PC-3 (cell line): ENCODE measurements at regions of chr3 and their contacts with region 1.

Region 1: GRCh38 chr3:146148468-146148931 is 12.5 kb downstream of the PLOD2 start:
- DNase-seq: peak; percentile 34
- ATAC-seq: peak; percentile 44; the same call in 1 of the 2 replicates
- H3K4me3 ChIP-seq: no peak overlapping the region
- H3K27ac ChIP-seq: no peak overlapping the region
- H3K4me1 ChIP-seq: peaks cover 35% of the 10 kb centered on the region
- H3K27me3 ChIP-seq: no peaks in the 10 kb centered on the region
- CTCF ChIP-seq: peak; percentile 64

Region 2: GRCh38 chr3:145971186-145971585 is 177.3 kb before region 1 on chr3:
- CTCF ChIA-PET with region 1: no interaction called
- POLR2A ChIA-PET with region 1: no interaction called
- intact Hi-C with region 1: no loop called
- DNase-seq: no peak
- ATAC-seq: no peak
- H3K4me3 ChIP-seq: no peak overlapping the region
- H3K27ac ChIP-seq: no peak overlapping the region
- H3K4me1 ChIP-seq: no peaks in the 10 kb centered on the region
- H3K27me3 ChIP-seq: no peaks in the 10 kb centered on the region
- CTCF ChIP-seq: no peak

Region 3: DNA sequence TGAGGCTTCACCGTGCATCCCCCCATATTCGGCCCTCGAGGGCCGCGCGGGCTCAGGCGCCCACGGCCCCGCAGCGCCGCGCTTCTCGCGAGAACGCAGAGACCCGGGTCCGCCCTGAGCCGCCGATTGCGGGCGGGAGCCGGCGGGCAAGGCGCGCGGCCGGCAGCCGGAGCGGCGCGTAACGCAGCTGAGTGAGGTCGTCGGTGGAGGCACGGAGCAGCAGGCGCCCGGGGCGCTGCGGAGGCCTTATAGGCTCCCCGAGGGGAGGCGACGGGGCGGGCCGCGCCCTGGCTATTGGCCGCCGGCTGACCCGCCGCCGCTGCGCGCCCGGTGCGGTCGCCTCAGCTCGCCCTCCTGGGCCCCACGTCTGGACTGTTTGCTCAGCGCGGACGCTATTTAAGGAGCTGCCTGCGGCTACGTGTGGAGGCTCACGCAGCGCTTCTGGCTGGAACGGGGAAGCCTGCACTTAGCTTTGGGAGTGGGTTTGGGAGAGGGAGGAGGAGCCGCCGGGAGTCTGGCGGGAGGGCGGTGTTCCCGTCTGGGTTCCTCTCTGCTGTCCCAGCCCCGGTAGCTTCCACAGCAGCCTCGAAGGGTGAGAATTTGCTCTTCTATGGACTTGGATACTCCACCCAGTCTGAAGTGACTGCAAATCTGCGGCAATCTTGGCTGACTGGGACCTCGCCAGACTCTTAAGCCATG is 12.6 kb after region 1 on chr3 and contains the start of gene PLOD2:
- CTCF ChIA-PET with region 1: no interaction called
- POLR2A ChIA-PET with region 1: no interaction called
- intact Hi-C with region 1: loop called (anchors 1 kb)
- DNase-seq: peak; percentile 97
- ATAC-seq: peak; percentile 57
- H3K4me3 ChIP-seq: peak within 1 kb of the TSS; percentile 79
- H3K27ac ChIP-seq: peak within 1 kb of the TSS; percentile 89
- H3K4me1 ChIP-seq: peaks cover 70% of the 10 kb centered on the region
- H3K27me3 ChIP-seq: no peaks in the 10 kb centered on the region
- CTCF ChIP-seq: no peak
- total RNA-seq, gene PLOD2: 76.1 and 84.8 TPM in 2 replicates